ENCODE measurements at regions of chr14 and their contacts with region 1.

Region 1: DNA sequence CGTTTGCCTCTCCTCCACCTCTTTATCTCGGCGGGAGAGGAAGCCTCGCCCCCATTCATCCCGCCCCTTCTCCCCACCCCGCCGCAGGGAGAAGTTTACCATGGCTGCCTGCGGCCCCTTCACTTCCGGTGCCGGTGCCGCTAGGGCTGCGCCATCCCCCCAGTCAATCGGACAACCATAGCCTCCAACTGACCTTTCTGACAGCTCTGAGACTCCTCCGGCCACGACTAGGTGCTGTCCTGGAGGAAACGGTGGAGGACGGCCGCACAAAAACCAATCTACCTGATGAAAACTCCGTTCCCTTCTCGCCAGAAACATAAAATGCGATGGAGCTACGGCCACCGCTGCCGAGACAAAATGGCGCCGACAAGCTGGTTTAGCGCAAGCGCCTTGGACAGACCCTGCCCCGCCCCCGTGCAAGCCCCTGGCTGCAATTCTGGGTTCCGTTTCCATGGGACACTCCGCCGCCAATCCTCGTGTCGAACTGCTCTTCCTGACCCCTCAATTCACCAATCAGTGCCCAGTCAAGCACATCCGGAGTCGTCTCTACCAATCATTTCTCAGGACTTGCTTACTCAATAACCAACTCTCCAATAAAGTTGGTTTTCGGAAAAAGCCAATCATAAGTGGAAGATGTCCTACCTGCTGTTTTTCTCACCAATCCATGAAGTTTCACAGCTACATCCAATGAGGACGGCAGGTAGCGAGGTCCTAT is 436 bp upstream of the ARID4A start:
- DNase-seq: peak; percentile 98 to 99 (median 99)
- H3K4me3 ChIP-seq: peak overlapping the region; percentile 86
- H3K4me3 Mint-ChIP-seq: no peak overlapping the region
- H3K27ac ChIP-seq: peak overlapping the region; percentile 96
- H3K27ac Mint-ChIP-seq: no peak overlapping the region
- H3K4me1 ChIP-seq: peaks cover 46% of the 10 kb centered on the region
- H3K4me1 Mint-ChIP-seq: peaks cover 49 to 68% (median 64%) of the 10 kb centered on the region in 3 donors
- H3K27me3 ChIP-seq: no peaks in the 10 kb centered on the region
- H3K27me3 Mint-ChIP-seq: peaks cover 0 to 1% of the 10 kb centered on the region in 2 donors

Region 2: DNA sequence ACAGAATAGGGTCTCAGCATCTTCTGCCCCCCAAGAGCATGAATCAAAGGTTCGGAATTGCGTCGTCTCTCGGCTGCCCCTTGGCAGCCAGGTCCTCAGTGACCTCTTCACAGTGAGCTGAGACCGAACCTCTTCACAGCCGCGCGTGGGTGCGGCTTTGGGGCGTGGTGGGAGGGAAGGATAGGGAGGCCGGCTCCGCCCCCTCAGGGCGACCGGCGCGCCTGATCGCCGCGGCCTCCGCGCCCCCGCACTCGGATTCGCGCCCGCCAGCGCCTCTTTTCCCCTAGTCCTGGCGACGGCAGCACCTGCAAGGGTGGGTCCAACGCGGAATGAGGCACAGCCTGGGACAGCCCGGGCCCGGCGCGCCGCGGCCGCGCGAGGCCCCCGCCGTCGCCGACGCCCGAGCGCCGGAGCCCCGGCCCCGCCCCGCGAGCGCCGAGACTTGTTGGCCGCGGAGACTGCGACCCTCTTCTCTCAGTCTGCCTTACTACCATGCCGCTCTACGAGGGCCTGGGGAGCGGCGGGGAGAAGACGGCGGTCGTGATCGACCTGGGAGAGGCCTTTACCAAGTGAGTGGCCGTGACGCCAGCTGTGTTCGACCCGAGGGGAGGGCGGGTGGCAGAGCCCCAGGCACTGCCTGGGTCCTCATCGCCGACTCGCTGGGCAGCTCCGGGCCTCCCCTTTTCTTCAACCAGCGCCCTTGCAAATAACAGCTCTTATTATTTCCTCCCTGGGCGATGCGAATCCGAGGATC is 98.0 kb before region 1 on chr14 and contains the start of gene ACTR10:
- CTCF ChIA-PET with region 1: no interaction called
- POLR2A ChIA-PET with region 1: interaction called, 22 read pairs
- DNase-seq: peak; percentile 77 to 91 (median 83)
- H3K4me3 ChIP-seq: peak within 1 kb of the TSS; percentile 72
- H3K4me3 Mint-ChIP-seq: peak within 1 kb of the TSS; percentile 90 to 98 (median 94)
- H3K27ac ChIP-seq: peak within 1 kb of the TSS; percentile 92
- H3K27ac Mint-ChIP-seq: peak within 1 kb of the TSS; percentile 93 to 99 (median 96)
- H3K4me1 ChIP-seq: peaks cover 29% of the 10 kb centered on the region
- H3K4me1 Mint-ChIP-seq: peaks cover 47 to 57% (median 52%) of the 10 kb centered on the region in 3 donors
- H3K27me3 ChIP-seq: no peaks in the 10 kb centered on the region
- H3K27me3 Mint-ChIP-seq: no peaks in the 10 kb centered on the region
- total RNA-seq, gene ACTR10: 38.7 to 41.5 TPM

Region 3: DNA sequence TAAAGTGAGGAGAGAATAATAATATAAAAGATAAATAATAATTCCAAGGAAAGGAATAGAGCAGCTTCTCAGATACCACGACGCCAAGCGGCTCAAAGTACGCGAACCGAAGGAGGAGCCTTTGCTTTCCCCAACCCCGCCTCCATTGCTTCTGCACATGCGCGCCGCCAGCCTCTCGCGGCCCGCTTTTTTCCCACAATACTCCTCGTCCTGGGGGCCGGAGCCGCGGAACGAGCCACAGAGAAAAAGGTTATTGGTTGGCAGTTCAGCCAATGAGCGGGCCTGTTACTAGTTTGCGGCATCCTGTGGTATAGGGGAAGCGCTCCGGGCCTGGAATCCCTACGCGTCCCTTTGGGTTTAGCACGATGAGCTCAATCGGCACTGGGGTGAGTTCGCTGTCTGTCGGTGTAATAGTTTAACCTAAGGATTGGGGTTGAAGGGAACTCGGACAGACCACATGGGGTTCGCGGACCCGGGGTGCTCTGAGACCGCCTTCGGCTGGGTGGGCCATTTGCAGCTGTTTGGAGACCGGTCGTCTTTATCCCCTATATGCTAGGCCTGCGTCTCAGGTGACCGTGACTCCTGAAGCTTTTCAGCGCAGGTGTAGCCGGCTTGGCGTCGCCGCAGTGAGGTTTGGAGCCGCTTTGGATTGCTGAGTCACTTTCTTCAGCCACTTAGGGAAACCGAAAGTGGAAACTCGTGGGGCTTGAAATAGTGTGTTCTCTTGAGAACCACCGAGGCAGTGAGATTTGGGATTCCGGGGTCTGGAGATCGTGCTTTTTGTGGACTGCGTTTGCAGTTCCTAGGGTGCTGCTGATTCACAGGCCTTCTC is 53.1 kb before region 1 on chr14 and contains the start of gene PSMA3:
- CTCF ChIA-PET with region 1: interaction called, 9 read pairs
- POLR2A ChIA-PET with region 1: interaction called, 37 read pairs
- DNase-seq: peak; percentile 95 to 98 (median 98)
- H3K4me3 ChIP-seq: peak within 1 kb of the TSS; percentile 99
- H3K4me3 Mint-ChIP-seq: peak within 1 kb of the TSS; percentile 87 to 100 (median 98)
- H3K27ac ChIP-seq: peak within 1 kb of the TSS; percentile 99
- H3K27ac Mint-ChIP-seq: peak within 1 kb of the TSS; percentile 96 to 100 (median 98)
- H3K4me1 ChIP-seq: peaks cover 32% of the 10 kb centered on the region
- H3K4me1 Mint-ChIP-seq: peaks cover 42 to 49% (median 42%) of the 10 kb centered on the region in 3 donors
- H3K27me3 ChIP-seq: no peaks in the 10 kb centered on the region
- H3K27me3 Mint-ChIP-seq: peaks cover 0 to 5% of the 10 kb centered on the region in 2 donors
- total RNA-seq, gene PSMA3: 334 to 343 TPM

Region 4: DNA sequence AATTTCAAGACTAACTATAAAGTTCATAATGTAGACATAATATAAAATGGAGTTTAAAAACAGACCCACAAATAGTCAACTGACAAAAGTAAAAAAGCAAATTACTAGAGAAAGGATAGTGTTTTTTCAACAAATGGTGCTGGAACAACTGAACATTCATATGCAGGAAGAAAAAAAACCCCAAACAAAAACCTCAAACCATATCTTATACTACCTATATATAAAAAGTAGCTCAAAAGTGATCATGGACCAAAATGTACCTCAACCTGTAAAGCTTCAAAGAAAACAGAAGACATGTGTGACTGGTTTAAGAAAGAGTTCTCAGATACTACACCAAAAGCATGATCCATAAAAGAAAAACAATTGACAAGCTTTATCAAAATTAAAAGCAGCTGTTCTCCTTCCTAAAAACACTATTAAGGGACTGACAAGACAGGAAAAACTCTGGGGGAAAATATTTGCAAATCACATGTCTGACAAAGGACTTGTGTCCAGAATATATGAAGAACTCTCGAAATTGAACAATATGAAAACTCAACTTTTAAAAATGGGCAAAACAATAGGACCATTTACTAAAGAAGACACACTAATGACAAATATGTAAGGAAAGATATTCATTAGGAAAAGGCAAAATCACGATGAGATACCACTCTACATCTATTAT is 22.3 kb before region 1 on chr14:
- CTCF ChIA-PET with region 1: interaction called, 6 read pairs
- POLR2A ChIA-PET with region 1: interaction called, 14 read pairs
- DNase-seq: peak in 1 of 5 donors; percentile 16
- H3K4me3 ChIP-seq: no peak overlapping the region
- H3K4me3 Mint-ChIP-seq: peak overlapping the region in 6 of 7 donors; percentile 25 to 60 (median 37)
- H3K27ac ChIP-seq: no peak overlapping the region
- H3K27ac Mint-ChIP-seq: peak overlapping the region in 7 of 8 donors; percentile 57 to 94 (median 84)
- H3K4me1 ChIP-seq: peaks cover 32% of the 10 kb centered on the region
- H3K4me1 Mint-ChIP-seq: peaks cover 43 to 69% (median 48%) of the 10 kb centered on the region in 3 donors
- H3K27me3 ChIP-seq: no peaks in the 10 kb centered on the region
- H3K27me3 Mint-ChIP-seq: no peaks in the 10 kb centered on the region

Region 5: GRCh38 chr14:58341152-58341748 is 43.3 kb after region 1 on chr14:
- CTCF ChIA-PET with region 1: no interaction called
- POLR2A ChIA-PET with region 1: no interaction called
- DNase-seq: no peak
- H3K4me3 ChIP-seq: no peak overlapping the region
- H3K4me3 Mint-ChIP-seq: no peak overlapping the region
- H3K27ac ChIP-seq: no peak overlapping the region
- H3K27ac Mint-ChIP-seq: peak overlapping the region in 4 of 8 donors; percentile 6 to 36 (median 25)
- H3K4me1 ChIP-seq: no peaks in the 10 kb centered on the region
- H3K4me1 Mint-ChIP-seq: peaks cover 5 to 17% (median 16%) of the 10 kb centered on the region in 3 donors
- H3K27me3 ChIP-seq: no peaks in the 10 kb centered on the region
- H3K27me3 Mint-ChIP-seq: no peaks in the 10 kb centered on the region

Region 6: GRCh38 chr14:58376791-58377190 is 78.9 kb after region 1 on chr14:
- CTCF ChIA-PET with region 1: no interaction called
- POLR2A ChIA-PET with region 1: no interaction called
- DNase-seq: no peak
- H3K4me3 ChIP-seq: no peak overlapping the region
- H3K4me3 Mint-ChIP-seq: no peak overlapping the region
- H3K27ac ChIP-seq: no peak overlapping the region
- H3K27ac Mint-ChIP-seq: no peak overlapping the region
- H3K4me1 ChIP-seq: no peaks in the 10 kb centered on the region
- H3K4me1 Mint-ChIP-seq: peaks cover 0 to 9% (median 7%) of the 10 kb centered on the region in 3 donors
- H3K27me3 ChIP-seq: no peaks in the 10 kb centered on the region
- H3K27me3 Mint-ChIP-seq: no peaks in the 10 kb centered on the region

Region 7: DNA sequence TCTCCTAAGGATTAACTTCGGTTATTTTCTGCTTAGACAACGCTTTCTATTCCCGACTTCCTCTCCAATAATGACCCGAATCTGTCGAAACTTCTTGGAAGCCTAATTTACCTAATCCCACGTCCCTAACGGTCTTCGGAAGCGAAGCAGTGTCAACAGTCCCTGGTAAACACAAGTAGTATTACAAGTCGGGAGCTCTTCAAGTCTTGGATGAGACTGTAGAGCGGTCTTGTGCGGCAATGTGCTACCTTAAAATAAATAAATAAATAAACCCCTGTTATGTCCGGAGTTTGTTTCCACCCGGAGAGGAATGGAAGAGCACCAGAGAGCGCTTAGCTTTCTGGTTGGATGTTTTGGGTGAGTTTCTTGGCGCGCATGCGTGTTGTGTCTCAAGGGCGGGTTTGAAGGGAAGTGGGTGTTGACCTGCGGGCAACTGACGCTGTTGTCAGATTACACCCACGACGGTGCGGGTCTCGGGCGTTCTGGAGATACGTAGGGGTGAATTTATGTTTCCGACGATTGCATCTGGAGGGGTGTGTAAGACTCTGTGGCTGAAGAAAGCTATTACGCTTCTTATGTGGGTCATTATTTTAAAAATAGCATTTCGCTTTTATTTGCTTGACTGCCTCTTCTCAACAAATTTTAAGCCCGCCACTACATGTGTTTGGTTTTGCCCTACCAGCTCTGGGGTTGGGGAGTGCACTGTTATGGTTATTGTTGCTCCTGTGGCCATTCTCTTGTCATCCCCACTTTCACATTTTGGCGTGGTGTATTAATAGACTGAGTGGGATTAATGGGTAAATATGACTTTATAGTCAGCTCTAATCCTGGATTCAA is 129.6 kb after region 1 on chr14 and contains the starts of genes KIAA0586 and TIMM9:
- CTCF ChIA-PET with region 1: interaction called, 4 read pairs
- POLR2A ChIA-PET with region 1: interaction called, 27 read pairs
- DNase-seq: peak; percentile 91 to 99 (median 96)
- H3K4me3 ChIP-seq: peak within 1 kb of the TSS; percentile 100
- H3K4me3 Mint-ChIP-seq: peak within 1 kb of the TSS; percentile 87 to 97 (median 93)
- H3K27ac ChIP-seq: peak within 1 kb of the TSS; percentile 100
- H3K27ac Mint-ChIP-seq: peak within 1 kb of the TSS; percentile 92 to 99 (median 96)
- H3K4me1 ChIP-seq: peaks cover 16% of the 10 kb centered on the region
- H3K4me1 Mint-ChIP-seq: peaks cover 44 to 65% (median 54%) of the 10 kb centered on the region in 3 donors
- H3K27me3 ChIP-seq: no peaks in the 10 kb centered on the region
- H3K27me3 Mint-ChIP-seq: peaks cover 0 to 8% of the 10 kb centered on the region in 2 donors
- total RNA-seq, gene KIAA0586: 19.3 to 20.3 TPM
- total RNA-seq, gene TIMM9: 84.3 to 96.7 TPM

Measured in CD8-positive, alpha-beta memory T cell (primary cell).